ENCODE measurements at regions of chr1 and their contacts with region 1.

Region 1: DNA sequence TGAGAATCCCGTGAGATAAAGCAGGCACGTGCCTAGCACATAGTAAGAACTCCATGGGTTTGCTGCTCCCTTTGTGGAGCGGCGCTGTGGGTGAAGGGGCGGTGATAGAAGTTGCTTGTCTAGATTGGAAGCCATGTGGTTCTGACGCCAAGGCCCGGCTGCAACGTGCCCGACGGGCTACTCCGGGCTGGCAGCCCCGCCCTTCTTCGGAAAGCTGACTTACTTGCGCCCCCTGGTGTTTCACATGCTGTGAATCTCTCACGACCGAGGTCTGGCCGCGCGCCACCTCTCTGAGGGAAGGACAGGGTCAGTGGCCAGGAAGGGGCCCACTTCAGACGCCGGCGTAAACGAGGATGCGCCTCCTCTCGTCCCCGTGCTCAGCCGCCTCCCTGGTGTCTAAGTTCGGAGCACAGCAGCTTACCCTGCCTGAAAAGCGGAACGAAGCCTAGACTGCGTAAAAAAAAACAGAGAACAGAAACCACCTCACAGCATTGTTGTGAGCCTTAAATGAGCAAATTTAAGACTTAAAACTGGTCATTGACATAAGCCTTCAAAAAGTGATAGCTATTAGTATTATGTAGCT is 42.6 kb upstream of the WNT2B start:
- DNase-seq: peak; percentile 66 to 85 (median 78)
- ATAC-seq: peak; percentile 94
- H3K4me3 ChIP-seq: peak overlapping the region; percentile 46
- H3K4me3 Mint-ChIP-seq: peak overlapping the region; percentile 71 to 89 (median 84)
- H3K27ac ChIP-seq: peak overlapping the region; percentile 30
- H3K27ac Mint-ChIP-seq: peak overlapping the region in 3 of 9 donors; percentile 43 to 73 (median 64)
- H3K4me1 ChIP-seq: peaks cover 0 to 3% of the 10 kb centered on the region in 2 donors
- H3K4me1 Mint-ChIP-seq: peaks cover 0 to 17% (median 9%) of the 10 kb centered on the region in 7 donors
- H3K27me3 ChIP-seq: no peaks in the 10 kb centered on the region
- H3K27me3 Mint-ChIP-seq: peaks cover 7 to 30% (median 19%) of the 10 kb centered on the region in 5 donors

Region 2: GRCh38 chr1:111481387-111482221 is 984.6 kb before region 1 on chr1:
- CTCF ChIA-PET with region 1: no interaction called
- POLR2A ChIA-PET with region 1: no interaction called
- intact Hi-C with region 1: loop called in 1 of 2 experiments (anchors 5 kb)
- DNase-seq: peak; percentile 23 to 65 (median 54)
- ATAC-seq: peak; percentile 80
- H3K4me3 ChIP-seq: no peak overlapping the region
- H3K4me3 Mint-ChIP-seq: peak overlapping the region in 1 of 10 donors; percentile 20
- H3K27ac ChIP-seq: no peak overlapping the region
- H3K27ac Mint-ChIP-seq: peak overlapping the region in 4 of 9 donors; percentile 22 to 86 (median 56)
- H3K4me1 ChIP-seq: peaks cover 22 to 25% of the 10 kb centered on the region in 2 donors
- H3K4me1 Mint-ChIP-seq: peaks cover 32 to 68% (median 53%) of the 10 kb centered on the region in 7 donors
- H3K27me3 ChIP-seq: no peaks in the 10 kb centered on the region
- H3K27me3 Mint-ChIP-seq: peaks cover 0 to 25% (median 0%) of the 10 kb centered on the region in 5 donors

Region 3: DNA sequence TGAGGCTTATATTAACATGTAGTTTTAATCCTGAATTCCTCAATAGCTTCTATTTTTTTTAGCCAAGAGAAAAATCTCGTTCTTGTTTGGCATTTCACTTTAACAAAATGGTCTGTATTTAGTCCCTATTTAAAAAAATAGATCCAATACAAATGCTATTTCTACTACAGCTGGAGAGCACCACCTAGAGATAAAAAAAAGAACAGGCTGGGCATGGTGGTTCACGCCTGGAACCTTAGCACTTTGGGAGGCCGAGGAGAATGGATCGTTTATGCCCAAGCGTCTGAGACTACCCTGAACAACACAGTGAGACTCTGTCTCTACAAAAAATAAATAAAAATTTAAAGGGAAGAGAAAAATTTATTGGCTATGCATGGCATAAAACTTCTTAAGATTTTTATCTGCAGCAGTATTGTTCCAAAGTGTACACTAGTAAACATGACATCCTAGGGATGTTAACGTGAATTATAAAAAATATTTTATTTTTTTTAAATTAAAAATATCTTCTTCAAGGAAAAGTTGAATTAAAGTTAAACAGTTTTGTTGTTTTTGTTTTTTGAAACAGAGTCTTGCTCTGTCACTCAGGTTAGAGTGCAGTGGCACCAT is 148.4 kb after region 1 on chr1:
- CTCF ChIA-PET with region 1: no interaction called
- POLR2A ChIA-PET with region 1: no interaction called
- intact Hi-C with region 1: loop called (anchors 1 to 2 kb)
- DNase-seq: peak in 5 of 9 donors; percentile 9 to 46 (median 33)
- ATAC-seq: no peak
- H3K4me3 ChIP-seq: no peak overlapping the region
- H3K4me3 Mint-ChIP-seq: peak overlapping the region in 1 of 10 donors; percentile 30
- H3K27ac ChIP-seq: no peak overlapping the region
- H3K27ac Mint-ChIP-seq: peak overlapping the region in 4 of 9 donors; percentile 49 to 87 (median 68)
- H3K4me1 ChIP-seq: peaks cover 8 to 11% of the 10 kb centered on the region in 2 donors
- H3K4me1 Mint-ChIP-seq: peaks cover 10 to 35% (median 14%) of the 10 kb centered on the region in 7 donors
- H3K27me3 ChIP-seq: no peaks in the 10 kb centered on the region
- H3K27me3 Mint-ChIP-seq: peaks cover 0 to 1% (median 0%) of the 10 kb centered on the region in 5 donors

Region 4: DNA sequence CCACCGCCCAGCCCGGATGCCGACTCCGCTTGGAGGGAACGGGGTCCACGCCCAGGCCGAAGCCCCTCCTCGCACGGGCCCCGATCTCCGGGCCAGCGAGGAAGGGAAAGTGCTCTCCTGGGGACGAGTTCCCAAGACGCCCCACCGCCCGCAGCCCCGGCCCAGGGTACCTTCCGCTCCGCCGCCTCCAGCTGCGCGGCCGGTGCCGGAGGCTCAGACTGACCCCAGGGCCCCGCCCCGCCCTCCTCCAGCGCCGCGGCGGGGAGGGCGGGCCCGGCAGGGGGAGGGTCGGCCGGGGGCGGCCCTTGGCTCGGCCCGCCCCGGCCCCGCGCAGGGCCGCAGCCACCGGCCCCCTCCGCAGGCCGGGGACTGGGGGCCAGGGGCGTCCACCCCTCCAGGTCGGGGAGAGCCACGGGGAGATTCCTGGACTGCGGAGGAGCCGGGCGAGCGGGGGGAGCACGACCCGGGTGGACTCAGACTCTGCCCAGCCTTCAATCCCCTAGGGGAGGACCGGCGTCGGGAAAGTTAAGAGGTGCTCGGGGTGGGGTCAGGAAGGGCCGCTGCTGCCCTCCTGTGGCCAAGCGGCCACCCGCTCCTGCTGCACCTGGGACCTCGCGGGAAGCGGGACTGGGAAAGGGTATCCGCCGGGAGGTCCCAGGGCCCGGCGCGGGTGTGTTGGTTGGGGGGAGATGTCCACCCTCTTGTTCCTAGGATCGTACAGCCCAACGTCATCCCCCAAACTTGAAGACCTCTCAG is 240.9 kb after region 1 on chr1 and contains the start of gene RHOC:
- CTCF ChIA-PET with region 1: no interaction called
- POLR2A ChIA-PET with region 1: no interaction called
- intact Hi-C with region 1: loop called in 1 of 2 experiments (anchors 1 kb)
- DNase-seq: peak in 6 of 9 donors; percentile 27 to 79 (median 44)
- ATAC-seq: peak; percentile 75
- H3K4me3 ChIP-seq: peak within 1 kb of the TSS; percentile 41
- H3K4me3 Mint-ChIP-seq: peak within 1 kb of the TSS; percentile 74 to 90 (median 83)
- H3K27ac ChIP-seq: no peak within 1 kb of the TSS
- H3K27ac Mint-ChIP-seq: peak within 1 kb of the TSS; percentile 13 to 87 (median 73)
- H3K4me1 ChIP-seq: peaks cover 22% of the 10 kb centered on the region in 2 donors
- H3K4me1 Mint-ChIP-seq: peaks cover 15 to 52% (median 45%) of the 10 kb centered on the region in 7 donors
- H3K27me3 ChIP-seq: no peaks in the 10 kb centered on the region
- H3K27me3 Mint-ChIP-seq: peaks cover 0 to 27% (median 0%) of the 10 kb centered on the region in 5 donors
- total RNA-seq, gene RHOC: 0.57 to 89.1 (median 18.7) TPM

Measured in naive thymus-derived CD4-positive, alpha-beta T cell (primary cell).